HCT116 (cell line): ENCODE measurements at regions of chr3 and their contacts with region 1.

Region 1: DNA sequence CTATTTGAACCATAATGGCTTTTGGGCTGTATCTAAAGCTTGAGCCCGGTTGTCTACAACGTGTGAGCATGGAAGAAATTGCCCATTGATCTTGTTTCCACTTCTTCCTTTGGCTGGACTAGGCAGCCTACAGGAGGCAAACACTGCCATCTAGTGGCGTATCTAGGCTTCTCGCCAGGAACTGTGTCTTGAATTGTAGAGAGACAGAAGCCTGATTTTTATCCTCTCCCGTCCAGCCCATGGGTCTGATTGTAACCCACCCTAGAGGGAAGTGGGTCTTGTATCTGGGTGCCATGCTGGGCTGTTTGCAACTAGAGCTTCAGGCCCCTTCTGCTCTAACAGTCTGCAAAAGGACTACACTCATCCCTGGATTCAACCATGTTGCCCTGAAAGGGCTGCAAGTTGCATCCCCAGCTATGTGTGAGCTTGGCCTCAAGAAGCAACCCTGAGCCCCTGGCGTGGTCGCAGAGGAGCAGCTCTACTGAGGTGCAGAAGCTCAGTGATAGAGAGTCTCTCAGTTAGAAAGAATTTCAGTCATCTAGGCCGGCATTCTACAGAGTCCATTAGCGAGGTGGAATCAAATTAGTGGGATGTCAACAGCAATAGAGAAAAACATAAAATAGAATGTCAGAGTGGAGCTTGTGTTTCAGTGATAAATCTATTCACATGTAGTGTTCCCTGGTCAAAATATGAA is 170.2 kb upstream of the UMPS start:
- DNase-seq: peak; percentile 72
- ATAC-seq: peak; percentile 90
- H3K4me3 ChIP-seq: no peak overlapping the region
- H3K27ac ChIP-seq: no peak overlapping the region
- H3K4me1 ChIP-seq: peaks cover 10 to 17% of the 10 kb centered on the region in 2 experiments; a peak in 3 of 4 replicates
- H3K27me3 ChIP-seq: peaks cover 41% of the 10 kb centered on the region; the same call in 1 of the 2 replicates
- CTCF ChIP-seq: peak; percentile 69 to 94 (median 91)
- POLR2A ChIP-seq: no peak
- RAD21 ChIP-seq: peak; percentile 83

Region 2: GRCh38 chr3:124351430-124352148 is 208.4 kb before region 1 on chr3:
- CTCF ChIA-PET with region 1: interaction called, 11 read pairs
- POLR2A ChIA-PET with region 1: no interaction called
- RAD21 ChIA-PET with region 1: no interaction called
- intact Hi-C with region 1: loop called (anchors 2 kb)
- DNase-seq: peak; percentile 31
- ATAC-seq: peak; percentile 84
- H3K4me3 ChIP-seq: no peak overlapping the region
- H3K27ac ChIP-seq: no peak overlapping the region
- H3K4me1 ChIP-seq: no peaks in the 10 kb centered on the region
- H3K27me3 ChIP-seq: peaks cover 40% of the 10 kb centered on the region
- CTCF ChIP-seq: peak; percentile 31 to 62 (median 59); a peak in 5 of 6 replicates
- POLR2A ChIP-seq: no peak
- RAD21 ChIP-seq: peak; percentile 74

Region 3: DNA sequence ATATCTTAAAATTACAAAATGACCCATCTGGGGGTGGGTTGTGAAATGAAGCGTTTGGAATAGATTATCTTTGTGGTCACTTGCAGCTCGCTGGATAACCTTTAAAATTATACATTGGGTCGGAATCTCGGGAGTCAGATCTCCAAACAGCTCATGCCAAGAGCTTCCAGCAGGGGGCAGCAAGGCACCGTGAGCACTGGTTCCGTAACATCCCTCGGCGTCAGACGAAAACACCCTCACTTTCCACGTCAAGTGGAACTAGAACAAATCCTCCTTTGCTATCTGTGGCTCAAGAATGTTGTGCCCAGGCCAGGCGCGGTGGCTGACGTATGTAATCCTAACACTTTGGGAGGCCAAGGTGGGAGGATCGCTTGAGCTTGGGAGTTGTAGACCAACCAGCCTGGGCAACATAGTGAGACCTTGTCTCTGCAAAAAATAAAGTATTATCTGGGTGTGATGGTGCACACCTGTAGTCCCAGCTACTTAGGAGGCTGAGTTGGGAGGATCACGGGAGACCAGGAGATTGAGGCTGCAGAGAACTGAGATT is 201.3 kb after region 1 on chr3:
- CTCF ChIA-PET with region 1: interaction called, 8 read pairs
- POLR2A ChIA-PET with region 1: no interaction called
- RAD21 ChIA-PET with region 1: interaction called in 1 of 2 experiments, 3 read pairs
- intact Hi-C with region 1: loop called (anchors 10 kb)
- DNase-seq: peak; percentile 56
- ATAC-seq: peak; percentile 87
- H3K4me3 ChIP-seq: 0 out of 4 replicates have a peak overlapping the region, but pooled peaks of 1 of the 2 experiments have one; percentile 6
- H3K27ac ChIP-seq: no peak overlapping the region
- H3K4me1 ChIP-seq: peaks cover 0 to 7% of the 10 kb centered on the region in 2 experiments; a peak in 1 of 4 replicates
- H3K27me3 ChIP-seq: no peaks in the 10 kb centered on the region
- CTCF ChIP-seq: peak; percentile 81 to 95 (median 93)
- POLR2A ChIP-seq: no peak
- RAD21 ChIP-seq: peak; percentile 94

Region 4: GRCh38 chr3:124986158-124987143 is 426.4 kb after region 1 on chr3:
- CTCF ChIA-PET with region 1: no interaction called
- POLR2A ChIA-PET with region 1: no interaction called
- RAD21 ChIA-PET with region 1: no interaction called
- intact Hi-C with region 1: loop called (anchors 5 kb)
- DNase-seq: peak; percentile 91
- ATAC-seq: peak; percentile 92
- H3K4me3 ChIP-seq: peak overlapping the region in 1 of 2 experiments; percentile 12; a peak in 1 of 4 replicates
- H3K27ac ChIP-seq: peak overlapping the region; percentile 63
- H3K4me1 ChIP-seq: peaks cover 21 to 29% of the 10 kb centered on the region in 2 experiments
- H3K27me3 ChIP-seq: no peaks in the 10 kb centered on the region
- CTCF ChIP-seq: peak; percentile 75 to 84 (median 83); a peak in 5 of 6 replicates
- POLR2A ChIP-seq: no peak
- RAD21 ChIP-seq: peak; percentile 65

Region 5: GRCh38 chr3:125011941-125012340 is 451.9 kb after region 1 on chr3:
- CTCF ChIA-PET with region 1: no interaction called
- POLR2A ChIA-PET with region 1: no interaction called
- RAD21 ChIA-PET with region 1: no interaction called
- intact Hi-C with region 1: no loop called
- DNase-seq: no peak
- ATAC-seq: no peak
- H3K4me3 ChIP-seq: no peak overlapping the region
- H3K27ac ChIP-seq: no peak overlapping the region
- H3K4me1 ChIP-seq: no peaks in the 10 kb centered on the region
- H3K27me3 ChIP-seq: no peaks in the 10 kb centered on the region
- CTCF ChIP-seq: no peak
- POLR2A ChIP-seq: no peak
- RAD21 ChIP-seq: no peak

Region 6: DNA sequence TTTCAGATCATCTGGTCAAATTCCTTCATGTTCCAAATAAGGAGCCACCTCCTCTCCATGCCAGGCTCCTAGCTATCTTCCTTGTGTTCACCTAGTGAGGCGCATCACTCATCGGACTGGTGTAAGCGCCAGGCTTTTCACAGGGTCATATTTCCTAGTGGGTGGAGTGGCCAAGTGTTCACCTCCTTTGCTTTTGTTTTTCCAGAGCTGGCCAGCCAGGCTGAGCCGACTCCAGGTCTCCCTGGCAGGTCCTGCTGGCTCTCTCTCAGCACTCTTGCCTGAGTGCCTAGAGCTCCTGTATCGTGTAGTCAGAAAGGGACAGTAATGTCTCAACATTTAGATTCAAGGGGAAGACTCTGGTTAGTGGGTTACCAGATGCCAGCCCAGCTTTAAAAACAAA is 464.8 kb after region 1 on chr3:
- CTCF ChIA-PET with region 1: no interaction called
- POLR2A ChIA-PET with region 1: no interaction called
- RAD21 ChIA-PET with region 1: no interaction called
- intact Hi-C with region 1: no loop called
- DNase-seq: no peak
- ATAC-seq: no peak
- H3K4me3 ChIP-seq: no peak overlapping the region
- H3K27ac ChIP-seq: no peak overlapping the region
- H3K4me1 ChIP-seq: no peaks in the 10 kb centered on the region
- H3K27me3 ChIP-seq: no peaks in the 10 kb centered on the region
- CTCF ChIP-seq: no peak
- POLR2A ChIP-seq: no peak
- RAD21 ChIP-seq: no peak